Naive thymus-derived CD4-positive, alpha-beta T cell (primary cell): ENCODE measurements at regions of chr1 and their contacts with region 1.

Region 1: GRCh38 chr1:201481761-201482493 is 12.9 kb upstream of the PHLDA3 start:
- DNase-seq: peak; percentile 58 to 80 (median 74)
- ATAC-seq: peak; percentile 89
- H3K4me3 ChIP-seq: peak overlapping the region; percentile 48
- H3K4me3 Mint-ChIP-seq: peak overlapping the region; percentile 71 to 84 (median 76)
- H3K27ac ChIP-seq: no peak overlapping the region
- H3K27ac Mint-ChIP-seq: no peak overlapping the region
- H3K4me1 ChIP-seq: peaks cover 15 to 19% of the 10 kb centered on the region in 2 donors
- H3K4me1 Mint-ChIP-seq: peaks cover 8 to 28% (median 23%) of the 10 kb centered on the region in 7 donors
- H3K27me3 ChIP-seq: peaks cover 0 to 14% of the 10 kb centered on the region in 2 donors
- H3K27me3 Mint-ChIP-seq: peaks cover 12 to 26% (median 20%) of the 10 kb centered on the region in 5 donors

Region 2: GRCh38 chr1:201447911-201448871 is 33.7 kb before region 1 on chr1:
- CTCF ChIA-PET with region 1: interaction called, 11 read pairs
- POLR2A ChIA-PET with region 1: no interaction called
- intact Hi-C with region 1: loop called (anchors 1 kb)
- DNase-seq: peak in 7 of 9 donors; percentile 21 to 62 (median 36)
- ATAC-seq: peak; percentile 90
- H3K4me3 ChIP-seq: no peak overlapping the region
- H3K4me3 Mint-ChIP-seq: no peak overlapping the region
- H3K27ac ChIP-seq: no peak overlapping the region
- H3K27ac Mint-ChIP-seq: peak overlapping the region in 1 of 9 donors; percentile 34
- H3K4me1 ChIP-seq: peaks cover 0 to 4% of the 10 kb centered on the region in 2 donors
- H3K4me1 Mint-ChIP-seq: peaks cover 0 to 35% (median 4%) of the 10 kb centered on the region in 7 donors
- H3K27me3 ChIP-seq: no peaks in the 10 kb centered on the region
- H3K27me3 Mint-ChIP-seq: peaks cover 7 to 27% (median 17%) of the 10 kb centered on the region in 5 donors

Region 3: DNA sequence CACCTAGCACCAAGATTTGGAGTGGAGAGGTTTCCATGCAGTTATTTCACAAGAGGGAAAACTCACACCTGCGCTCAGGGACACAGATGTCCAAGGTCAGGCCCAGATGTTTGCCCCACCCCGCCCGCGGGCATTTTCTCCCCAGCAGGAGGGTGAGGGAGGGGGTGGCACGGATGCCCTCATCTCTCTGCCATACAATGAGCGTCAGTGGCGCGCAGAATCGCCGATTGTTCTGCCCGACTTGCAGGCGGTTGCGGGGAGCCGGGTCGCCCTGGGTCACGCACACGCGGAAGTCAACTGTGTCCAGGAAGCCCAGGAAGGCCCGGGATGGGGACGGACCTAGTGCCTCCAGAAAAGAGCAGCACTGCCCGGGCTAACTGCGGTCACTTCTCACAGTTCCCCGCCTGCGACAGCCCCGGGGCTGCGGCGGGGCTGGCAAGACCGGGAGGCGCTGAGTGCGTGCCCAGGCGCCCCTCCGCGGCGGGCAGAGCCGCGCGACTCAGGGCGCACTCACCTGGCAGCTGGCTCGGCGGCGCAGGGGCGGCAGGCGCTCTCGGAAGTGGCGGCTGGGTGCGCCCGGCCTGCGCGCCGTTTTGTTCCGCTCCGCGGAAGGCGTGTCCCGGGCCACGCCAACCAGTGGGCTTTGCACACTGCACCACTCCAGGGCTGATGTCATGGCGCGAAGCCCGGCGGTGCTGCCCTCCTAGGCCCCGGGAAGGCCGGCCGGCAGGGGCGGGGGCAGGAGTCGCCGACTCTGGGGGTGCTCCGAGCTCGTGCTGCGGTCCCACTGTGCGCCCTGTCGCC is 24.8 kb after region 1 on chr1 and contains the start of gene CSRP1:
- CTCF ChIA-PET with region 1: interaction called, 215 read pairs
- POLR2A ChIA-PET with region 1: interaction called, 3 read pairs
- intact Hi-C with region 1: loop called in 1 of 2 experiments (anchors 1 kb)
- DNase-seq: peak; percentile 64 to 84 (median 80)
- ATAC-seq: peak; percentile 97
- H3K4me3 ChIP-seq: peak within 1 kb of the TSS; percentile 87
- H3K4me3 Mint-ChIP-seq: peak within 1 kb of the TSS; percentile 88 to 94 (median 91)
- H3K27ac ChIP-seq: peak within 1 kb of the TSS; percentile 74
- H3K27ac Mint-ChIP-seq: peak within 1 kb of the TSS; percentile 83 to 97 (median 91)
- H3K4me1 ChIP-seq: peaks cover 20 to 28% of the 10 kb centered on the region in 2 donors
- H3K4me1 Mint-ChIP-seq: peaks cover 30 to 61% (median 57%) of the 10 kb centered on the region in 7 donors
- H3K27me3 ChIP-seq: no peaks in the 10 kb centered on the region
- H3K27me3 Mint-ChIP-seq: no peaks in the 10 kb centered on the region
- total RNA-seq, gene CSRP1: 24.2 to 83.1 (median 37.7) TPM

Region 4: DNA sequence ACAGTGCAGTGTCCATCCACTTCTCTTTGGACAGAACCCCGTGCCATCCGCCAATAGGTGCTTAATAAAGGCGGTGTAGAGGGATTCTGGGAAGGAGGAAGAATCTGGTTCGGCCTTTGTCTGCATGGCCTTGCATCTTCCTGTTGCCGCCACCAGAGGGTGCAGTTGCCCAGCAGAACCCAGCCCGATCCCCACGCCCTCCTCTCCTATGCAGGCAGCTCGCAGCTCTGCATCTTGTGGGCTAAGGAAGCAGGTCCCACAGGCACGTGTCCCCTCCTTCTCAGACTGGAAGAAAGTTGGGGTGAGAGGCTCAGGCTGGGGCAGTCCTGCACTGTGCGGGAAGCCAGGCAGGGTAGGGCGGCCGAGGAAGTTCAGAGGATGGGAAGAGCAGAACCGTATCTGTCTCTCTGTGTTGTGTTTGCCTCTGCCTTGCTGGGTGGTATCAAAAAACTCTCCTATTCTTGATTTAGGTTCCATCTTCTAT is 77.8 kb after region 1 on chr1:
- CTCF ChIA-PET with region 1: no interaction called
- POLR2A ChIA-PET with region 1: no interaction called
- intact Hi-C with region 1: loop called (anchors 2 kb)
- DNase-seq: peak; percentile 30 to 64 (median 56)
- ATAC-seq: peak; percentile 94
- H3K4me3 ChIP-seq: no peak overlapping the region
- H3K4me3 Mint-ChIP-seq: peak overlapping the region in 1 of 10 donors; percentile 54
- H3K27ac ChIP-seq: no peak overlapping the region
- H3K27ac Mint-ChIP-seq: no peak overlapping the region
- H3K4me1 ChIP-seq: no peaks in the 10 kb centered on the region
- H3K4me1 Mint-ChIP-seq: peaks cover 0 to 6% (median 3%) of the 10 kb centered on the region in 7 donors
- H3K27me3 ChIP-seq: no peaks in the 10 kb centered on the region
- H3K27me3 Mint-ChIP-seq: no peaks in the 10 kb centered on the region

Region 5: DNA sequence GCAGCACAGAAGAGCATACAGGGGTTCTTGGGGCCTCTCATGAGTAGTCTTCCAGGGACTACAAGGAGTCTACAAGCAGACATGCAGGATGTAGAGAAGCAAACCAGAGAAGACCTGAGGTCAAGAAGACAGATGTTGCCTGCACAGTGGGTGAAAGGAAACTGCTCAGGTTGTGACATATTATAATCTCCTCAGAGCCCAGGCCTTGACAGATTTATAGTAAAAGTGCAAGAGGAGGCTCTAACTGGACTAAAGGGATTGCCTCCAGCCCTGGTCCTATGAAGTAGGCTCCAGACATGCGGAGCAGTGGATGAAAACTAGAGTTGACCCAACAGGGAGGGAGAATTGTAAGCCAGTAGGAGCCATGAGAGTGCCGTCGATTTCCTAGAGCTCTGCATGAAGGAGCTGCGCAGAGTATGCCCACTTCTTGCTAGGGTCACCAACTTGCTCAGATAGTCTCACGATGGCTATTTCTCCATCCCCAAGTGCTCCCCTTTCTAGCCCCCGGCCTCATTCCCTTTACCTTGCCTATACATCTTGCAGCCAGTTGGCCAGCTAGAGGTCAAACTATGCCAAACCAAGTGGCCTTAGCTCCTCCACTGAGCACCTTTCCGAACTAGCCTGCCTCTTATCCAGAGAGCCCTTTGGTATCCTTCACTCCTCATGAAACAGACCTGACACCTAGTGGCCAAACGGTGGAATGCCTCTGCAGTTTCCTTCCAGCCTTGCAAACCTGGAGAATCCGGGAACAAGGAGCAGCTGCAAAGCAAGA is 310.8 kb after region 1 on chr1:
- CTCF ChIA-PET with region 1: no interaction called
- POLR2A ChIA-PET with region 1: no interaction called
- intact Hi-C with region 1: loop called in 1 of 2 experiments (anchors 5 kb)
- DNase-seq: peak in 8 of 9 donors; percentile 12 to 48 (median 34)
- ATAC-seq: peak; percentile 67
- H3K4me3 ChIP-seq: no peak overlapping the region
- H3K4me3 Mint-ChIP-seq: no peak overlapping the region
- H3K27ac ChIP-seq: no peak overlapping the region
- H3K27ac Mint-ChIP-seq: peak overlapping the region in 1 of 9 donors; percentile 49
- H3K4me1 ChIP-seq: no peaks in the 10 kb centered on the region
- H3K4me1 Mint-ChIP-seq: peaks cover 0 to 22% (median 0%) of the 10 kb centered on the region in 7 donors
- H3K27me3 ChIP-seq: no peaks in the 10 kb centered on the region
- H3K27me3 Mint-ChIP-seq: peaks cover 0 to 4% (median 0%) of the 10 kb centered on the region in 5 donors